Mammary epithelial cell (primary cell): ENCODE measurements at regions of chr6 and their contacts with region 1.

Region 1: DNA sequence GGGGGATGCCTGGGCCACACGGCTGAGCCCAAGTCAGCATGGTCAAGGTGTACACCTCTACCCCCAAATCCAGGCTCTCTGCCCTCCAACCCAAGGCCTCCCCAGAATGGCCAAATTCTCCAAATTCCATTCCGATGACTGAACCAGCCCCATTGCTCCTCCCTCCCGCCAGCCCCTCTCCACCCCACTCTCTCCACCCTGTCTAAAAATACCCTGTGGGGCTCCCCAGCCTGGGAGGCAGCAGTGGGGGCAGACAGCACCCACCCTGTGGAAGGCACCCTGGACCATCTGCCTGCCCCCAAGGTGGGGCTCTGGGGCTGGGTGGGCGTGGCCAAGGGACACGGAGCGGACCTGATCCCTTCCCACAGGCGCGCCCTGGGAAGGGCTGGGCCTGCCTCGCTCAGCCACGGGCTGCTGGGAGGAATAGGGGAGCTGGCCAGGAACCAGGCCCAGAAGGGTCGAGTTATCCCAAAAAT is 11.4 kb downstream of the TEAD3 start:
- DNase-seq: peak; percentile 74
- H3K4me3 ChIP-seq: peak overlapping the region; percentile 9 to 33 (median 21)
- H3K27ac ChIP-seq: peak overlapping the region; percentile 98
- H3K4me1 ChIP-seq: peaks cover 57% of the 10 kb centered on the region
- H3K27me3 ChIP-seq: no peaks in the 10 kb centered on the region
- CTCF ChIP-seq: no peak

Region 2: DNA sequence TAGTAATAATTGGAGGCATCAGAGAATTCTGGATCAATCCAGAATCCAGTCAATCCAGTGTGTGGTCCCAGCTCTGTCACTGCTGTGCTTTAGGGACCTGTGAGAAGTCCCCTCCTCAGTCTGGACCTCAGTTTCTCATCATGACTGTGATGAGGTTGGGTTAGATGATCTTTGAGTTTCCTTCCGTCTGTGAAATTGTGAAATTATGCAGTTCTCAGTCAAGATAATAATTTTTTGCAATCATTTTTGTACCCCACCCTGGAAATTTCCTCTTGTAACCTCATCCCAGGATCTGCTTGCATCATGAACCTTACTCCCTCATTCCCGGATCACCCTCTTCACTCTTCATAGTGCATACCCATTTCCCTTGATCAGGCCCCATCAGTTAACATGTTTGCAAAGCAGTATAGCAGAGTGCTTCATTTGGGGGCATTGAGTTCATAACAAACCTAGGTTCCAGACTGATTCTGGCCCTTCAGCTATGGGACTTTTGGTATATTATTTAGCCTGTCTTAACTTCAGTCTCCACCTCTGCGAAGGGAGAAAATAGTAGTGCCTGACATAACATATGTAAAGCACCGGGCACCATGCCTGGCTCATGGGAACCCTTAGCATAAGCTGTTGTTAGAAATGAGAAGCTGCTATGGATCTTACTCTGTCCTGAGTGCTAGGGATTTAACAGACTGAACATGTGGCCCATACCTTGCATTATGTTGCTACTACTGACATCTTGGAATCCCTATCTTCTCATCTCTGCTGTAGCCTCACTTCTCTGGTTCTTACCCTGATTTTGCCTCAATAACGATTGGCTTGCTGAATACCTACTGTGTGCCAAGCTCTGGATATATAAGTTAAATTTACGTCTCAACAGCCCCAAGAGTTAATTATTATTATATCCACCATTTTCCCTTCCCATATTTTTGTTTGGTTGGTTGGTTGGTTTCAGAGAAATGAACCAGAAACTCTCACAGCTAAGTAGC is 224.6 kb before region 1 on chr6:
- CTCF ChIA-PET with region 1: no interaction called
- dilution Hi-C with region 1: no loop called
- in situ Hi-C with region 1: no loop called
- intact Hi-C with region 1: no loop called
- DNase-seq: no peak
- H3K4me3 ChIP-seq: peak overlapping the region; percentile 25 to 68 (median 63)
- H3K27ac ChIP-seq: peak overlapping the region; percentile 77
- H3K4me1 ChIP-seq: peaks cover 13% of the 10 kb centered on the region
- H3K27me3 ChIP-seq: no peaks in the 10 kb centered on the region
- CTCF ChIP-seq: no peak

Region 3: GRCh38 chr6:35474941-35475583 is 10.4 kb before region 1 on chr6:
- CTCF ChIA-PET with region 1: interaction called, 7 read pairs
- dilution Hi-C with region 1: no loop called
- in situ Hi-C with region 1: no loop called
- intact Hi-C with region 1: loop called (anchors 1 kb)
- DNase-seq: no peak
- H3K4me3 ChIP-seq: no peak overlapping the region
- H3K27ac ChIP-seq: no peak overlapping the region
- H3K4me1 ChIP-seq: peaks cover 11% of the 10 kb centered on the region
- H3K27me3 ChIP-seq: no peaks in the 10 kb centered on the region
- CTCF ChIP-seq: no peak

Region 4: GRCh38 chr6:35496841-35497570 is 11.6 kb after region 1 on chr6 and contains the start of gene TEAD3:
- CTCF ChIA-PET with region 1: no interaction called
- dilution Hi-C with region 1: no loop called
- in situ Hi-C with region 1: no loop called
- intact Hi-C with region 1: loop called (anchors 1 kb)
- DNase-seq: peak; percentile 76
- H3K4me3 ChIP-seq: peak within 1 kb of the TSS; percentile 69 to 88 (median 78)
- H3K27ac ChIP-seq: peak within 1 kb of the TSS; percentile 85
- H3K4me1 ChIP-seq: peaks cover 37% of the 10 kb centered on the region
- H3K27me3 ChIP-seq: no peaks in the 10 kb centered on the region
- CTCF ChIP-seq: peak in 1 of 2 donors; percentile 26
- total RNA-seq, gene TEAD3: 12.5 to 26.4 TPM

Region 5: DNA sequence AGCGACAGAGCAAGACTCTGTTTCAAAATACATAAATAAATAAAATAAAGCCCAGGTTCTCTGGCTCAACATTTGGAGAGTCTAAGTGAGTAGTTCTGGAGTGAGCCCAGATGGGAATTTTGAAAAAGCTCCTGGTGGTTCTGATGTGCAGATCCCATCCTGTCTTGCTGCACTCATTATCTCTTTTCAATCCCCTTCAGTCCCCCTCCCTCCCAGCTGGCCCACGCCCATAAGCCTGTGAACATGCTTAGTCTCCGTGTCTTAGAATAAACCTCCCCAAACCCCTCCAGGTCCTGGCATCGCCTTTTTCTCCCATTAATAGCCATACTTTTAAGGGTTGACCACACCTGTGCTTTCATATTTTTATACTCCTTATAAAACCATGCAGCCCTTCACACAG is 46.7 kb after region 1 on chr6:
- CTCF ChIA-PET with region 1: no interaction called
- dilution Hi-C with region 1: no loop called
- in situ Hi-C with region 1: no loop called
- intact Hi-C with region 1: no loop called
- DNase-seq: no peak
- H3K4me3 ChIP-seq: no peak overlapping the region
- H3K27ac ChIP-seq: no peak overlapping the region
- H3K4me1 ChIP-seq: no peaks in the 10 kb centered on the region
- H3K27me3 ChIP-seq: no peaks in the 10 kb centered on the region
- CTCF ChIP-seq: no peak